BJ (cell line): ENCODE measurements at regions of chr11 and their contacts with region 1.

Region 1: GRCh38 chr11:96464700-96465307 is 75.0 kb downstream of the JRKL start:
- DNase-seq: peak; percentile 11
- H3K4me3 ChIP-seq: no peak overlapping the region
- H3K27me3 ChIP-seq: no peaks in the 10 kb centered on the region
- CTCF ChIP-seq: peak; percentile 66

Region 2: DNA sequence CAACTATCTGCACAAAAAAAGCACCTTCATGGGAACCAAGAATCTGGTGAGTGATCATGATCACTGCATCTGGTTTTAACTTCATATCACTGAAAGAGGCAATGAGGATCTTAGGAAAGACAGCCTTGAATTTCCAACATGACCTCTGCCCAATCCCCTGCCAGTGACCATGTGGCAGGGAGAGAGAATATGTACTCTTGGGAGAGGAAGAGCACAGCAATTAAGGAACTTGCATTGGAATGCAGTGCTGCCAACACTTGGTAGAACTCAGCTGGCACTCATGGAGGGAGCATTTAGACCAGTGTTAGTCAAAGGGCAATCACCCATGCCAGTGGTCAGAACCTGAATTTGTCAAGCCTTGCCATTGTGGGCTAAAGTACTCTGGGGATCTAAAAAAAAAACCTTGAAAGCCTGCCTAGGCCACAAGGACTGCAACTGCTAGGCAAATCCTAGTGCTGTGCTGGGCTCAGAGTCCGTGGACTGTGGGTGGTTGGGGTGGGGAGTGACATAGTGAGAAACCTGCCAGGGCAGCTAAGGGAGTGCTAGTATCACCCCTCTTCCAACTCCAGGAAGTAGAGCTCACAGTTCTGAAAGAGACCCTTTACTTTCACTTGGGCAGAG is 51.9 kb before region 1 on chr11:
- CTCF ChIA-PET with region 1: no interaction called
- POLR2A ChIA-PET with region 1: no interaction called
- DNase-seq: no peak
- H3K4me3 ChIP-seq: no peak overlapping the region
- H3K27me3 ChIP-seq: no peaks in the 10 kb centered on the region; the same call in 1 of the 2 replicates
- CTCF ChIP-seq: no peak

Region 3: GRCh38 chr11:96447208-96448110 is 17.3 kb before region 1 on chr11:
- CTCF ChIA-PET with region 1: interaction called, 10 read pairs
- POLR2A ChIA-PET with region 1: no interaction called
- DNase-seq: no peak
- H3K4me3 ChIP-seq: no peak overlapping the region
- H3K27me3 ChIP-seq: peaks cover 6% of the 10 kb centered on the region; the same call in 1 of the 2 replicates
- CTCF ChIP-seq: no peak

Region 4: GRCh38 chr11:96664110-96664509 is 199.3 kb after region 1 on chr11:
- CTCF ChIA-PET with region 1: no interaction called
- POLR2A ChIA-PET with region 1: no interaction called
- DNase-seq: no peak
- H3K4me3 ChIP-seq: no peak overlapping the region
- H3K27me3 ChIP-seq: no peaks in the 10 kb centered on the region
- CTCF ChIP-seq: no peak

Region 5: GRCh38 chr11:96794152-96794551 is 329.3 kb after region 1 on chr11:
- CTCF ChIA-PET with region 1: interaction called, 38 read pairs
- POLR2A ChIA-PET with region 1: no interaction called
- DNase-seq: no peak
- H3K4me3 ChIP-seq: no peak overlapping the region
- H3K27me3 ChIP-seq: no peaks in the 10 kb centered on the region
- CTCF ChIP-seq: 0 out of 2 replicates have a peak, but pooled peaks have one; percentile 10